Activated CD4-positive, alpha-beta memory T cell treated with anti-CD3 and anti-CD28 coated beads for 36 hours (primary cell): ENCODE measurements at regions of chr16 and their contacts with region 1.

Region 1: DNA sequence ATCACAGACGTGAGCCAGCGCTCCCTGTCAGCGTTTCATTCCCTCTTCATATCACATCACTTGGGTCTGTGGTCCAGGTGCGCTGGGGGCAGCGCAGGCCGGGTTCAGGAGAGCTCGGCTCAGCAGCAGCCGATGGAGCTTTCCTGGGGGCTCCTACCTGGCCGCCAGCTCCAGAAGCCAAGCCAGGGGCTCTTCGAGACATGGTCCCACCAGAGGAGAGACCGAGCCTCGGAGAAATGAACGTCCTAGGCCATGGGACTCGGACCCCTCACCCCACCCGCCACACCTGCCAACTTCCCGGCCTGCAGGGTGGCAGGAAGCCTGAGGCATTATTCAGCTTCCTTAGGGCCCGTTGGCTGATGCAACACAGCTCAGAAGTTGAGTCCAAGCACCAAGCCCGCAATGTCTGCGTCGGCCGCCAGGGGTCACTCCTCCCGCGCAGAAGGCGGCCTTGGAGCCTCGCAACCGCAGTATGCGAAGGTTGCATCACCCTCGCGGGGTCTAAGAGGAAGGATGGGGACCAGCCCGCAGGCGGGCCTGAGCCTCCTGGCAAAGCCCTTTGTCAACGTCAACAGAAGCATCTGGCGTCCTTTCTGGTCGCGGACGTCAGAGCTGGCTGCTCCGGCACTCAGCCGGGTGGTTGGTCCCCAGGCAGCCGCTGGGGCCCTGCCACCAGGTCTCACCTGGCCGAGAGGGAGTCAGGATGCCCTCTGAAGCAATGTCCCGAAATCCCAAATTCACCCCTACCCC is 13.2 kb upstream of the KLHDC4 start:
- DNase-seq: peak; percentile 97
- H3K4me3 Mint-ChIP-seq: peak overlapping the region; percentile 75
- H3K27ac Mint-ChIP-seq: peak overlapping the region; percentile 95
- H3K4me1 Mint-ChIP-seq: peaks cover 43% of the 10 kb centered on the region
- H3K27me3 Mint-ChIP-seq: no peaks in the 10 kb centered on the region

Region 2: GRCh38 chr16:87765776-87766484 is 13.1 kb before region 1 on chr16 and contains the start of gene KLHDC4:
- CTCF ChIA-PET with region 1: interaction called, 36 read pairs
- POLR2A ChIA-PET with region 1: interaction called, 10 read pairs
- intact Hi-C with region 1: no loop called
- DNase-seq: peak; percentile 94
- H3K4me3 Mint-ChIP-seq: peak within 1 kb of the TSS; percentile 97
- H3K27ac Mint-ChIP-seq: peak within 1 kb of the TSS; percentile 92
- H3K4me1 Mint-ChIP-seq: peaks cover 38% of the 10 kb centered on the region
- H3K27me3 Mint-ChIP-seq: no peaks in the 10 kb centered on the region
- total RNA-seq, gene KLHDC4: 65.9 to 70.2 TPM

Region 3: GRCh38 chr16:87806603-87807546 is 27.9 kb after region 1 on chr16:
- CTCF ChIA-PET with region 1: interaction called, 20 read pairs
- POLR2A ChIA-PET with region 1: interaction called, 22 read pairs
- intact Hi-C with region 1: loop called (anchors 1 kb)
- DNase-seq: peak; percentile 76
- H3K4me3 Mint-ChIP-seq: peak overlapping the region; percentile 79
- H3K27ac Mint-ChIP-seq: peak overlapping the region; percentile 81
- H3K4me1 Mint-ChIP-seq: peaks cover 23% of the 10 kb centered on the region
- H3K27me3 Mint-ChIP-seq: no peaks in the 10 kb centered on the region

Region 4: DNA sequence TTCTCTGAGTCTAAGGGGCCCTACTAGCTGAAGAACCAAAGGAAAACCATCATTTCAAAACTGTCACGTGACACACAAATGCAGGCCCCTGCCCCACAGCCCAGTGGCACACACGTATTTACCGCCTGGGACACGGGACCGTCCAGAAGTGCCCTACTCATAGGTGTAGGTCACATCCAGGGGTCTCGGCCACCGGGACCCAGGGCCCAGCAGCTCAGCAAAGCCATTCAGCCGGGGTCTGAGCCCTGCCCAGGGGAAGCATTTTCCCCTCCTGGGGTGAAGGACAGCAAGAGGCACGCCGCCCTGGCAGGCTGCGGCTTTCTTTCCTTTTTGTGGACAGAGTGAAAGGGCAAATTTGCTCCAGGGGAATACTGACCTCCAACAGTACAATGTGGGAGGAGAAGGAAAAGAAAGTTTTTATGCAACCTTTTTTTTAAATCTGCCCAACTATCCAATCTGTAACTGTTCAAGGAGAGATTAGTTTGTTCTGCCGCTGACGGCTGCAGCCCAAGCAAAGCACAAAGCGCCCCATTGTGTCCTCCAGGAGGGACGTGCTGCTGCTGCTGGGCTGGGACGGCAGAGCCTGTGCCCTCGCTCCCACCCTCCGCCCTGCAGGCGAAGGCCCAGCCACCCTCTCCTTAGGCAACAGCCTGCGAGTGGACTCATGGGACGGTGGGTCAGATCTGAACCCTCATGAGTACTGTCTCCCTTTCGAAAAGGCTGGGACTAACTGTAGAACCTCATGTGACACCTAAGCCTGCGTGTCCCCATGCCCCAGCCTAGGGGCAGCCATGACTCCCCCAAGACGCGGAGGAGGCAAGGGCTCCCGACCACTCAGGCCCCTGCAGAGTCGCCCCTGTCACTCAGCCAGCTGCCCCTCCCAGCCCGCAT is 69.0 kb after region 1 on chr16:
- CTCF ChIA-PET with region 1: interaction called, 64 read pairs
- POLR2A ChIA-PET with region 1: interaction called, 5 read pairs
- intact Hi-C with region 1: loop called (anchors 1 kb)
- DNase-seq: no peak
- H3K4me3 Mint-ChIP-seq: no peak overlapping the region
- H3K27ac Mint-ChIP-seq: no peak overlapping the region
- H3K4me1 Mint-ChIP-seq: peaks cover 10% of the 10 kb centered on the region
- H3K27me3 Mint-ChIP-seq: no peaks in the 10 kb centered on the region

Region 5: DNA sequence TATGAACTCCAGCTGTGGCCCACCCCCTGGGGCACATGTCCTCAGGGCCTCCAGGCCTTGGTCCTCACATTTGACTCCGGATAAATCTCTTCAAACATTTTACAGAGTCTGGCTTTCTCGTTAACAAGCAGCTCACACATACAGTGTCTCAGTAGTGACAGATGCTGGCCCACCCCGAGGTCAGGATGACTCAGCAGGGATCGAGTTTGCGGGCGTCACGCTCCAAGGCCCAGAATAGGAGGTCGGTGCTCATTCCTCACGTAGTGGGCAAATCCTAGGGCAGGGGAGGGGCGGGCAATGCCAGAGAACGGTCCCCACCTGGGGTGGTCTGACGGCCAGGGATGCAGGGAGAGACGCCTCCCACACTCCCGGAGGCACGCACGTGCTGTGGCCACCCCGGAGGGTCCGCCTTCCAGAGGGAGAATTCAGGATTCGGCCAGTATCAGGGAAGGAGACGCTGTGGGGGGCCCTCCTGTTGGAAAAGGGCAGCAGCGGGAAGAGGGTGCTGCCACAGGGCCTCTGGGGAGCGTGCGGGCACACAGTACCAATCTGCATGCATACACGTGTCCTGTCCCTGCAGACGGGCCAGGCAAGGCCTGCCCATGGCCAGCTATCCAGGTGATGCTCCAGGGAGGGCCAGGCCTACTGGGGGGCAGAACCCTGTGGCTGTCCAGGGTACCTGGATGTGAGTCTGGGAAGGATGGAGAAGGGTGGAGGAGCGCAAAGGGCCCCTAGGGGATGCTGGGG is 81.7 kb after region 1 on chr16:
- CTCF ChIA-PET with region 1: interaction called, 275 read pairs
- POLR2A ChIA-PET with region 1: interaction called, 18 read pairs
- intact Hi-C with region 1: no loop called
- DNase-seq: peak; percentile 39
- H3K4me3 Mint-ChIP-seq: peak overlapping the region; percentile 56
- H3K27ac Mint-ChIP-seq: peak overlapping the region; percentile 81
- H3K4me1 Mint-ChIP-seq: peaks cover 80% of the 10 kb centered on the region
- H3K27me3 Mint-ChIP-seq: no peaks in the 10 kb centered on the region

Region 6: DNA sequence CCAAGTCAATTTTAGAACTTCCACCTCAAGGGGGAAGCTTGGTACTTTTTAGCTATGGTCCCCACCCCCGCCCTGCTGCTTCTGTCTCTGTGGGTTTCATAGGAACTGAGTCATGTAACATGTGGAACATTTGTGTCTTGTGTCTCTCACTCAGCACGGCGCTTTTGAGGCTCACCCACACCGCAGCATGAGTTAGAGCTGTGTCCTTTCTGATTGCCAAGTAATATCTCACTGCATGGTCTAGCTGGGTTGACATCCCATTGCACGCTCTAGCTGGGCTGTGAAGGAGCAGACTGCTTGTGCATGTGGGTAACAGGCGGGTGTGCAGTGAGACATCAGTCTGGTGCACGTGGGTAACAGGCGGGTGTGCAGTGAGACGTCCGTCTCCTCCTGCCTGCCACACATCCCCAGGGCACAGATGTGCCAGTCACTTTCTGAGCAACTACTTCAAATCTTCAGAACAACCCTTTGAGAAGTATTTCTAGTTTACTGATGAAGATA is 116.7 kb after region 1 on chr16:
- CTCF ChIA-PET with region 1: interaction called, 56 read pairs
- POLR2A ChIA-PET with region 1: interaction called, 36 read pairs
- intact Hi-C with region 1: loop called (anchors 1 kb)
- DNase-seq: peak; percentile 96
- H3K4me3 Mint-ChIP-seq: peak overlapping the region; percentile 58
- H3K27ac Mint-ChIP-seq: peak overlapping the region; percentile 99
- H3K4me1 Mint-ChIP-seq: peaks cover 51% of the 10 kb centered on the region
- H3K27me3 Mint-ChIP-seq: no peaks in the 10 kb centered on the region

Region 7: DNA sequence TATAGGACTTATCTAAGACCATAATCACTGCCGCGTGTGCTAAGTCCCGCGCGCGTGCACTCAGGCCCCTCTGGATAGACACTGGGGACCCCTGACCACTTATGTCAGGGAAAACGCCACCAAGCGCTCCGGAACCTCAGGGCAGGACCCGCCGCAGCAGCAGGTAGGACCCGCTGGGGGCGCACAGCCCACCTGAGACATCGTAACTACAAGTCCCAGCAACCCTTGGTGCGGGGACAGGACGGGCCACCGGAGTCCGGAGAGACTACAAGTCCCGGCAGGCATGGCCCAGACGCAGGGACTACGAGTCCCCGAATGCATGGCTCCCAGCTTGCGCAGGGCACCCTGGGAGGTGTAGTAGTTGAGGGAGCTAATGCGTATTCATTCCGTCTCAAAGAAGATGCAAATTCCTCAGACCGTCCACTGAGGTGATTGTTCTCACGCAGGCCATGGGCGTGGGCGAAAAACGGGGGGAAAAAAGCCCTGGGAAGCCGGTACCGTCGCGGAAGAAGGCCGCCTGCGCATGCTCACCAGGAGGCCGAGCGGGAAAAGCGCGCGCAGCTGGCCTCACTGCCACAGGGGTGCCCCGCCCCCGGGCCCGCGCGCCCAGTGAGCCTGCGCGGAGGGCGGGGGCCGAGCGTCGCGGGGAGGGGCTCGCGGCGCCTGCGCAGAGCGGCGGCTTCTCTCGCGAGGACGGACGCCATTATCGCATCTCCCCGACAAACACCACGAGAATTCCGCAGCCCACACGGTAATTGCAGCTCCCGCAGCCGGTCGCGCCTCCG is 172.0 kb after region 1 on chr16 and contains the start of gene BANP:
- CTCF ChIA-PET with region 1: interaction called, 6 read pairs
- POLR2A ChIA-PET with region 1: interaction called, 8 read pairs
- intact Hi-C with region 1: loop called (anchors 1 kb)
- DNase-seq: peak; percentile 98
- H3K4me3 Mint-ChIP-seq: peak within 1 kb of the TSS; percentile 96
- H3K27ac Mint-ChIP-seq: peak within 1 kb of the TSS; percentile 100
- H3K4me1 Mint-ChIP-seq: peaks cover 43% of the 10 kb centered on the region
- H3K27me3 Mint-ChIP-seq: peaks cover 2% of the 10 kb centered on the region
- total RNA-seq, gene BANP: 29.6 to 30.6 TPM